ENCODE measurements at regions of chr13 and their contacts with region 1.

Region 1: GRCh38 chr13:99176309-99177276 is 24.1 kb upstream of the UBAC2 start:
- DNase-seq: peak; percentile 88
- ATAC-seq: peak; percentile 93
- H3K4me3 Mint-ChIP-seq: peak overlapping the region; percentile 35
- H3K27ac Mint-ChIP-seq: peak overlapping the region; percentile 28
- H3K4me1 Mint-ChIP-seq: peaks cover 38% of the 10 kb centered on the region
- H3K27me3 Mint-ChIP-seq: peaks cover 5% of the 10 kb centered on the region

Region 2: GRCh38 chr13:99200432-99201167 is 24.0 kb after region 1 on chr13 and contains the start of gene UBAC2:
- CTCF ChIA-PET with region 1: interaction called, 32 read pairs
- POLR2A ChIA-PET with region 1: interaction called, 6 read pairs
- DNase-seq: peak; percentile 96
- ATAC-seq: peak; percentile 81
- H3K4me3 Mint-ChIP-seq: peak within 1 kb of the TSS; percentile 97
- H3K27ac Mint-ChIP-seq: peak within 1 kb of the TSS; percentile 97
- H3K4me1 Mint-ChIP-seq: peaks cover 64% of the 10 kb centered on the region
- H3K27me3 Mint-ChIP-seq: no peaks in the 10 kb centered on the region
- total RNA-seq, gene UBAC2: 67.4 to 71.2 TPM

Region 3: DNA sequence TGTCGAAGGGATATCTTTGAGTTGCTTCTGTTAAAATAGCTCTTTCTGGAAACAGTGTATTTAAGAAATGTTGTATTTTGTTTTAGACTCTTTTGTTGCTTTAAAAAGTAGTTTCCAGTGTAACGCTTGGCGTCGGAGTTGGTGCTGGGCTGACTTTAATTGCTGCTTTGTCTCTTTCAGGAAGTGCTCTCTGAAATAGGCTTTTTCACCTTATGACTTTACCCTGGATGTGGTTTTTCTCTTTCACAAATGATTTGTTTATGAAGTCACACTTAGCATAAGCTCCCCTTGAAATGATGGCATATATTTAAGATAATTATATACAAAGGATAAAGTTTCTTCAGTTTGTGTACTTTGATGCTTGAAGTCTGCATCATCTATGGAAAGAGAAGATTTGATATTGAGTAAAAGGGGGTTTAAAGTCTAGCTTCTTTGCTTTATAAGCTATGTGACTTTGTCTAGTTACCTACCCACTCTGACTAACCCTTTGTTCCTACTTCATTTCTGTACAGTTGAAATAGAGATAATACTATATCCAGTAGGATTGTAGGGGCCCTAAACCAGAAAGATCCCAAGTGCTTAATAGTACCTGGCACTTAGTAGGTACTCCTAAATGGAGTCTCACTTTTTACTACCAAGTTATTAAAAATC is 81.7 kb after region 1 on chr13 and contains the start of gene GPR18:
- CTCF ChIA-PET with region 1: interaction called, 319 read pairs
- POLR2A ChIA-PET with region 1: interaction called, 3 read pairs
- DNase-seq: peak; percentile 65
- ATAC-seq: peak; percentile 76
- H3K4me3 Mint-ChIP-seq: peak within 1 kb of the TSS; percentile 83
- H3K27ac Mint-ChIP-seq: peak within 1 kb of the TSS; percentile 94
- H3K4me1 Mint-ChIP-seq: peaks cover 65% of the 10 kb centered on the region
- H3K27me3 Mint-ChIP-seq: no peaks in the 10 kb centered on the region
- total RNA-seq, gene GPR18: 16.2 to 16.6 TPM

Region 4: DNA sequence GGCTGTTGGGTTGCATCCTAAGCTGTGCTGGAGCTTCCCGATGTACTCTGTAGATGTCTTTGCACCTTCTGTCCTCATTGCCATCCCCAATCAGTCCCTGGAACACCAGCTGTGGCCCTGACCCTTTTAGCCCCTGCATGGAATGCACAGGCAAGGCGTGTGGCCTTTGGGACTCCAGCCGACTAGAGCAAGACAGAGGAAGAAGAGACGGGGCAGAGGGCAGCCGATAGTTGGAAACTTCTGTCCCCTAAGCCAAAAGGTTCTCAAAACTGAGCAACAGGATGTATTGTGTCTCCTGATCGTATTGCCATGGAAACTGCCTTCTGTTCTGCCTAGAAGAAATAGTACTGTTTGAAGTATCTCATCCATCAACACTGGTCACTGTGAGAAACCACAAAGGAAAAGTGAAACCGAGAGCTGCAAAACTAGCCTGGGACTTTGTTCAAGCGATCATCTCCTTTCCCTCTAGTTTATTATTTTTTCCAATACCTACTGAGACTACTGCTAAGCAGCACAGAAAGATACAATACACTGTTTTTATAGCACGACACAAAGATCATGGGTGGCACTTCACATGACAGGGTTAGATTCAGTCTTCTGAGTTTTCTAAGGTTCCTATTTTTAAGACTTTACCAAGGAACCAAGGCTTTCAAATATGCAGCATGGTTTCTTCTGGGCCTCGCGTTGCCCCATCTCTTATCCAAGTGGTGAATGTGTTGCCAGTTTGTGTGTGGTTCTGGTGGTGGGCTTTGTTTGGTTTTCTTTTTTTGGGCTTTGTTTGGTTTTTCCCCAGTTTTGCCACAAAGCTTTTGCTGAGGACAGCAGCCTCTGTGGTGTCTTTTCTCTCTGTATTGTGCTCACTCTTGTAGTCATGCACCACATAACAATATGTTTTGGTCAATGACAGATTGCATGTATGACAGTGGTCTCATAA is 179.8 kb after region 1 on chr13:
- CTCF ChIA-PET with region 1: interaction called, 10 read pairs
- POLR2A ChIA-PET with region 1: no interaction called
- DNase-seq: peak; percentile 86
- ATAC-seq: peak; percentile 81
- H3K4me3 Mint-ChIP-seq: peak overlapping the region; percentile 39
- H3K27ac Mint-ChIP-seq: peak overlapping the region; percentile 89
- H3K4me1 Mint-ChIP-seq: peaks cover 96% of the 10 kb centered on the region
- H3K27me3 Mint-ChIP-seq: no peaks in the 10 kb centered on the region

Measured in activated CD8-positive, alpha-beta T cell treated with anti-CD3 and anti-CD28 coated beads, Interleukin-2, amount 10 ng/mL, durations not matched to agents 7 days and 5 days (primary cell).